HepG2 (cell line): ENCODE measurements at regions of chr15 and their contacts with region 1.

Region 1: DNA sequence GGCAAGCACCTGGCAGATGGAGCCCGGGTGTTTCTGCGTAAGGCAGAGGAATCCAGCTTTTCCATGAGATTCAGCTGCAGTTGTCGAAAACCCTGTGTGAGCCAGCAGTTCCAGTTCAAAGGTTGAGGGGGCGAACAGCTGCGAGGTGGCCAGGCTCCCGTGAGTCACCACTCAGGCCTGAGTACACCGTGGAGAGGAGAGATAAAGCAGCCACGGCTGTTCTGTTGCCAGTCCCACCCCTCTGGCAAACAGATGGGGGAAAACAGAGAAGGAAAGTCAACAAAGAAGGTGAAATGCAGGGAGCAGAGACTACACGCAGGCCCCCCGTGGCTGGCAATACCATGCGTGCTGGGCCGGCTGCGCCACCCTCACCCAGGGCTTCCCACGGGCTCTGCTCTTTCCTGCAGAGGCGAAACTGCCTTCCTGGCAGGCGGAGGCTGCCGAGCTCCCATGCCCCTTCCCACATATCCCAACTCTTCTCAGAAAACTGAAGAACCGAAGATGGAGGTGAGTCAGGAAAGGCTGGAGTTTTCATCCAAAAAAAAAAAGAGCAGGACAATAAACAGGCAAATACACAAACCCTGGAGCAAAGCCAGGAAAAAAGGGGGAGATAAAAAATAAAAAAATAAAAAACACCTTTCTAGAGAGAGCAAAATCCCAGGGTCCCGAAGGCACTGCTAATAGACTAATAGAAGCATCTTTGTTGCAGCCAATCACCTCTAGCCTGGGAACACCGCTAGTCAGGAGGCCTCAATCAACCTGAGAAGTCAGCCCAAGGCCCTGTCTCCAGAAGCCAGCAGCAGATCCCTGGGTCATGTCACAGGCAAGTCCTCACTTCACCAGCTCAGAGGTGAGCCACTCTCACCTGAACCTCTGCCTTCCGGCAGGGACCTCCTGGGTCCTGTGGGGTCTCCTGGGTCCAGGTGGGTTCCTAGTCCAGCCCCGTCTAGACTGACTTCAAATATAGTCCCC is 37.7 kb downstream of the FAM174B start:
- DNase-seq: peak; percentile 82
- ATAC-seq: peak; percentile 98
- H3K4me3 ChIP-seq: peak overlapping the region; percentile 5 to 61 (median 31); a peak in 5 of 6 replicates
- H3K27ac ChIP-seq: no peak overlapping the region
- H3K4me1 ChIP-seq: peaks cover 32% of the 10 kb centered on the region
- H3K27me3 ChIP-seq: no peaks in the 10 kb centered on the region; a peak in 1 of 5 replicates
- CTCF ChIP-seq: 0 out of 2 replicates have a peak, but pooled peaks have one; percentile 3
- EP300 ChIP-seq: 0 out of 4 replicates have a peak, but pooled peaks of 1 of the 2 experiments have one; percentile 41
- POLR2A ChIP-seq: no peak
- RAD21 ChIP-seq: no peak

Region 2: DNA sequence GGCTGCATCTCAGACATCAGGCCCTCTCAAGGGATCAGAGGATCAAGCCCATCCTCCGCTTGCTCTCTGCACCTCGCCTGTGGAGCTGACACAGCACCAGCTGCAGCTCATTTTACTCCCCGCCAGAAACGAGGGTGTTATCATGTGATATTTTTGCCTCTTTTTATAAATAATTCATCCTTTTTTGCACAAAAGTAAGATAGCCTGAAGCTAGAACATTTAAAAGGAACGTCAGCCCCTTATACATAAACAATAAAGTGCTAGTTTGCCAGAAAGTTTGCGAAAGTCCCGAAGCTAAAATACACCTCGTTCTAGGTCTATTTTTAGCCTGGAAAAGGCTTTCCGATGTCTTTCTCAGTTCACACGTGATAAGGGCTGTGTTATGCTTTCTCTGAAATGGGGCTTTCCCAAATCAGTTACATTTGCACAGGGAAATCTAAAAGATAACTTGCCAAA is 47.3 kb after region 1 on chr15:
- CTCF ChIA-PET with region 1: no interaction called
- POLR2A ChIA-PET with region 1: interaction called, 4 read pairs
- in situ Hi-C with region 1: no loop called
- intact Hi-C with region 1: loop called (anchors 10 kb)
- DNase-seq: no peak
- ATAC-seq: no peak
- H3K4me3 ChIP-seq: no peak overlapping the region
- H3K27ac ChIP-seq: no peak overlapping the region
- H3K4me1 ChIP-seq: peaks cover 20% of the 10 kb centered on the region
- H3K27me3 ChIP-seq: peaks cover 0 to 31% of the 10 kb centered on the region in 2 experiments; a peak in 4 of 5 replicates
- CTCF ChIP-seq: no peak
- EP300 ChIP-seq: no peak
- POLR2A ChIP-seq: no peak
- RAD21 ChIP-seq: no peak

Region 3: DNA sequence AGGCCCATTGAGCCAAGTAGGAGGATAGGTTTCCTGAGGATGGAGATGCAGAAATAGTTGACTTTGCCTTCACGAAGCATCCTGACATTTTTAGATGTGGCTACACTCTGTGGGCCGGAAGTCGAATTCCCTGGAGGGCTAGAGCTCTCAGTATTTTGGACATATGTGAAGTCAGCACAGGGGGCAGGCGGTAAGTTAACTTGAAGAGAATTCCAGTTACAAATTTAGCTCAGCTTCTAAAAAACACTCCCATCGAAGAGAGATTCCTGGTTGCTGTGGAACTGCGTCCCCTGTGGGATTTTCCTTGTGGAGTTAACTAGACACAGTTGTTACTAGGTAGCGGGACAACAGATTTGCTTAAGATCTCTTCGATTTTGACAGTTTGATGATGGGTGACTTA is 633.1 kb after region 1 on chr15:
- CTCF ChIA-PET with region 1: no interaction called
- POLR2A ChIA-PET with region 1: no interaction called
- in situ Hi-C with region 1: no loop called
- intact Hi-C with region 1: no loop called
- DNase-seq: no peak
- ATAC-seq: no peak
- H3K4me3 ChIP-seq: no peak overlapping the region
- H3K27ac ChIP-seq: no peak overlapping the region
- H3K4me1 ChIP-seq: no peaks in the 10 kb centered on the region
- H3K27me3 ChIP-seq: peaks cover 2 to 64% of the 10 kb centered on the region in 2 experiments; a peak in 4 of 5 replicates
- CTCF ChIP-seq: no peak
- EP300 ChIP-seq: no peak
- POLR2A ChIP-seq: no peak
- RAD21 ChIP-seq: no peak